Activated B cell treated with CpG ODN at 0.5 μM for 24 hours (primary cell): ENCODE measurements at regions of chr2 and their contacts with region 1.

Region 1: DNA sequence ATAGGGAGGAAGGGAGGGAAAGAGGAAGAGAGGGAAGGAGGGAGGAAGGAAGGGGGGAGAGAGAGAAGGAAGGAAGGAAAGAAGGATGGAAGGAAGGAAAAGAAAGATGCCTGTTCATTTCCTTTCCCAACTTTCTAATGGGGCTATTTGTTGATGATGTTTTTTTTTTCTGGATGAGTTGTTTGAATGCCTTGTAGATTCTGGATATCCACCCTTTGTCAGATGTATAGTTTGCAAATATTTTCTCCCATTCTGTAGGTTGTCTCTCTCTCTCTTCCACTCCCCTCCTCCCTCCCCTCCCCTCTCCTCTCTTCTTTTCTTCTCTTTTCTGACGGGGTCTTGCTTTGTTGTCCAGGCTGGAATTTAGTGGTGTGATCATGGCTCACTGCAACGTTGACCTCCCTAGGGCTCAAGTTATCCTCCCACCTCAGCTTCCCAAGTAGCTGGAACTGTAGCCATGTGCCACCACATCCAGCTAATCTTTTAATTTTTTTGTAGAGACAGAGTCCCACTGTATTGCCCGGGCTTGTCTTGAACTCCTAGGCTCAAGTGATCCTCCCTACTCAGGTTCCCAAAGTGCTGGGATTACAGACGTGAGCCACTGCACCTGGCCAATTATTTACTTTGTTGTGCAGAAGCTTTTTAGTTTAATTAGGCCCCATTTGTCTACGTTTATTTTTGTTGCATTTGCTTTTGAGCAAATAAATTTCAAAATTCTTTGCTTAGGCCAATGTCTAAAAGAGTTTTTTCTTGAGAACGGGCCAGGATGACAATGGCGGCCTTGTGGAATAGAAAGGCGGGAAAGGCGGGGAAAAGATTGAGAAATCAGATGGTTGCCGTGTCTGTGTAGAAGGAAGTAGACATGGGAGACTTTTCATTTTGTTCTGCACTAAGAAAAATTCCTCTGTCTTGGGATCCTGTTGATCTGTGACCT is 57.3 kb upstream of the FAM117B start:
- DNase-seq: no peak
- ATAC-seq: no peak
- H3K4me3 Mint-ChIP-seq: no peak overlapping the region
- H3K27ac Mint-ChIP-seq: no peak overlapping the region
- H3K4me1 Mint-ChIP-seq: no peaks in the 10 kb centered on the region
- H3K27me3 Mint-ChIP-seq: no peaks in the 10 kb centered on the region
- CTCF ChIP-seq: no peak

Region 2: DNA sequence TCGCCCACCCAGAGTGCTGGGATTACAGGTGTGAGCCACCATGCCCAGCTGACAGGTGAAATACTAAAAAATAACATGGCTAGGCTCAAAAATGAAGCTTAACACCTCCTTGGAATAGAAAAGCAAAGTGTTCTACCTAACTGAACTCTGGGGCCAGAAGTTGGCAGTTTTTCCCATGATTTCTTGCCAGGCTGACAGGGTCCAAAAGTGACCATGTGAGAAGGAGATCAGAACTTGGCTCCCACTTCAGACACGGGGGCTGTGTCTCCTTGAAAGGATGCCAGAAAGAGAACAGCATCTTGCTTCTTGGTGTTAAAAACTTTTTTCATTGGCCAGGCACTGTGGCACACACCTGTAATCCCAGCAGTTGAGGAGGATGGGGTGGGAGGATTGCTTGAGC is 154.4 kb before region 1 on chr2:
- CTCF ChIA-PET with region 1: no interaction called
- POLR2A ChIA-PET with region 1: no interaction called
- intact Hi-C with region 1: no loop called
- DNase-seq: no peak
- ATAC-seq: no peak
- H3K4me3 Mint-ChIP-seq: no peak overlapping the region
- H3K27ac Mint-ChIP-seq: no peak overlapping the region
- H3K4me1 Mint-ChIP-seq: peaks cover 12% of the 10 kb centered on the region
- H3K27me3 Mint-ChIP-seq: peaks cover 3% of the 10 kb centered on the region
- CTCF ChIP-seq: no peak

Region 3: GRCh38 chr2:202705446-202706020 is 128.0 kb after region 1 on chr2:
- CTCF ChIA-PET with region 1: no interaction called
- POLR2A ChIA-PET with region 1: no interaction called
- intact Hi-C with region 1: no loop called
- DNase-seq: no peak
- ATAC-seq: no peak
- H3K4me3 Mint-ChIP-seq: no peak overlapping the region
- H3K27ac Mint-ChIP-seq: peak overlapping the region; percentile 0
- H3K4me1 Mint-ChIP-seq: peaks cover 55% of the 10 kb centered on the region
- H3K27me3 Mint-ChIP-seq: no peaks in the 10 kb centered on the region
- CTCF ChIP-seq: no peak

Region 4: GRCh38 chr2:202831242-202832220 is 254.0 kb after region 1 on chr2:
- CTCF ChIA-PET with region 1: no interaction called
- POLR2A ChIA-PET with region 1: no interaction called
- intact Hi-C with region 1: loop called (anchors 2 kb)
- DNase-seq: no peak
- ATAC-seq: peak; percentile 58
- H3K4me3 Mint-ChIP-seq: no peak overlapping the region
- H3K27ac Mint-ChIP-seq: no peak overlapping the region
- H3K4me1 Mint-ChIP-seq: peaks cover 9% of the 10 kb centered on the region
- H3K27me3 Mint-ChIP-seq: no peaks in the 10 kb centered on the region
- CTCF ChIP-seq: no peak

Region 5: GRCh38 chr2:202950592-202950991 is 373.1 kb after region 1 on chr2:
- CTCF ChIA-PET with region 1: no interaction called
- POLR2A ChIA-PET with region 1: no interaction called
- intact Hi-C with region 1: no loop called
- DNase-seq: no peak
- ATAC-seq: no peak
- H3K4me3 Mint-ChIP-seq: no peak overlapping the region
- H3K27ac Mint-ChIP-seq: no peak overlapping the region
- H3K4me1 Mint-ChIP-seq: no peaks in the 10 kb centered on the region
- H3K27me3 Mint-ChIP-seq: no peaks in the 10 kb centered on the region
- CTCF ChIP-seq: no peak

Region 6: GRCh38 chr2:203097735-203098134 is 520.2 kb after region 1 on chr2:
- CTCF ChIA-PET with region 1: no interaction called
- POLR2A ChIA-PET with region 1: no interaction called
- intact Hi-C with region 1: loop called (anchors 2 kb)
- DNase-seq: no peak
- ATAC-seq: no peak
- H3K4me3 Mint-ChIP-seq: no peak overlapping the region
- H3K27ac Mint-ChIP-seq: no peak overlapping the region
- H3K4me1 Mint-ChIP-seq: no peaks in the 10 kb centered on the region
- H3K27me3 Mint-ChIP-seq: no peaks in the 10 kb centered on the region
- CTCF ChIP-seq: no peak

Region 7: GRCh38 chr2:203155406-203155805 is 577.9 kb after region 1 on chr2:
- CTCF ChIA-PET with region 1: no interaction called
- POLR2A ChIA-PET with region 1: no interaction called
- intact Hi-C with region 1: loop called (anchors 1 kb)
- DNase-seq: no peak
- ATAC-seq: no peak
- H3K4me3 Mint-ChIP-seq: no peak overlapping the region
- H3K27ac Mint-ChIP-seq: no peak overlapping the region
- H3K4me1 Mint-ChIP-seq: peaks cover 3% of the 10 kb centered on the region
- H3K27me3 Mint-ChIP-seq: no peaks in the 10 kb centered on the region
- CTCF ChIP-seq: no peak

Region 8: GRCh38 chr2:203453858-203454451 is 876.4 kb after region 1 on chr2:
- CTCF ChIA-PET with region 1: interaction called, 5 read pairs
- POLR2A ChIA-PET with region 1: interaction called, 7 read pairs
- intact Hi-C with region 1: loop called (anchors 1 kb)
- DNase-seq: no peak
- ATAC-seq: peak; percentile 28
- H3K4me3 Mint-ChIP-seq: no peak overlapping the region
- H3K27ac Mint-ChIP-seq: no peak overlapping the region
- H3K4me1 Mint-ChIP-seq: no peaks in the 10 kb centered on the region
- H3K27me3 Mint-ChIP-seq: peaks cover 4% of the 10 kb centered on the region
- CTCF ChIP-seq: peak; percentile 72